Ascending aorta (tissue), 2 donors: ENCODE measurements at regions of chr17 and their contacts with region 1.

Region 1: GRCh38 chr17:50865984-50866774 is at the start of gene TOB1:
- DNase-seq: peak; percentile 92 to 99
- H3K4me3 ChIP-seq: peak within 1 kb of the TSS; percentile 98 to 99
- H3K27ac ChIP-seq: peak within 1 kb of the TSS; percentile 99 to 100
- H3K4me1 ChIP-seq: peaks cover 0 to 22% of the 10 kb centered on the region in 2 donors
- H3K27me3 ChIP-seq: no peaks in the 10 kb centered on the region
- CTCF ChIP-seq: no peak
- total RNA-seq, gene TOB1: 41.7 TPM

Region 2: GRCh38 chr17:50672831-50673601 is 193.2 kb before region 1 on chr17:
- intact Hi-C with region 1: no loop called
- DNase-seq: peak; percentile 54 to 90
- H3K4me3 ChIP-seq: no peak overlapping the region
- H3K27ac ChIP-seq: peak overlapping the region; percentile 51 to 66
- H3K4me1 ChIP-seq: peaks cover 2 to 7% of the 10 kb centered on the region in 2 donors
- H3K27me3 ChIP-seq: no peaks in the 10 kb centered on the region
- CTCF ChIP-seq: no peak

Region 3: GRCh38 chr17:50798424-50799288 is 67.5 kb before region 1 on chr17:
- intact Hi-C with region 1: no loop called
- DNase-seq: no peak
- H3K4me3 ChIP-seq: no peak overlapping the region
- H3K27ac ChIP-seq: peak overlapping the region in 1 of 2 donors; percentile 23
- H3K4me1 ChIP-seq: no peaks in the 10 kb centered on the region
- H3K27me3 ChIP-seq: no peaks in the 10 kb centered on the region
- CTCF ChIP-seq: no peak

Region 4: GRCh38 chr17:50904521-50905459 is 38.6 kb after region 1 on chr17:
- intact Hi-C with region 1: loop called (anchors 1 kb)
- DNase-seq: peak in 1 of 2 donors; percentile 82
- H3K4me3 ChIP-seq: no peak overlapping the region
- H3K27ac ChIP-seq: peak overlapping the region; percentile 95 to 99
- H3K4me1 ChIP-seq: peaks cover 13 to 26% of the 10 kb centered on the region in 2 donors
- H3K27me3 ChIP-seq: no peaks in the 10 kb centered on the region
- CTCF ChIP-seq: no peak

Region 5: GRCh38 chr17:50919321-50920085 is 53.3 kb after region 1 on chr17:
- intact Hi-C with region 1: loop called (anchors 1 kb)
- DNase-seq: peak; percentile 77 to 96
- H3K4me3 ChIP-seq: no peak overlapping the region
- H3K27ac ChIP-seq: peak overlapping the region; percentile 50 to 63
- H3K4me1 ChIP-seq: peaks cover 0 to 16% of the 10 kb centered on the region in 2 donors
- H3K27me3 ChIP-seq: no peaks in the 10 kb centered on the region
- CTCF ChIP-seq: peak in 1 of 3 experiments; percentile 29

Region 6: GRCh38 chr17:50931144-50931908 is 65.1 kb after region 1 on chr17:
- intact Hi-C with region 1: loop called (anchors 1 kb)
- DNase-seq: peak; percentile 79 to 96
- H3K4me3 ChIP-seq: peak overlapping the region; percentile 47 to 63
- H3K27ac ChIP-seq: peak overlapping the region; percentile 96 to 98
- H3K4me1 ChIP-seq: peaks cover 18 to 38% of the 10 kb centered on the region in 2 donors
- H3K27me3 ChIP-seq: no peaks in the 10 kb centered on the region
- CTCF ChIP-seq: no peak

Region 7: DNA sequence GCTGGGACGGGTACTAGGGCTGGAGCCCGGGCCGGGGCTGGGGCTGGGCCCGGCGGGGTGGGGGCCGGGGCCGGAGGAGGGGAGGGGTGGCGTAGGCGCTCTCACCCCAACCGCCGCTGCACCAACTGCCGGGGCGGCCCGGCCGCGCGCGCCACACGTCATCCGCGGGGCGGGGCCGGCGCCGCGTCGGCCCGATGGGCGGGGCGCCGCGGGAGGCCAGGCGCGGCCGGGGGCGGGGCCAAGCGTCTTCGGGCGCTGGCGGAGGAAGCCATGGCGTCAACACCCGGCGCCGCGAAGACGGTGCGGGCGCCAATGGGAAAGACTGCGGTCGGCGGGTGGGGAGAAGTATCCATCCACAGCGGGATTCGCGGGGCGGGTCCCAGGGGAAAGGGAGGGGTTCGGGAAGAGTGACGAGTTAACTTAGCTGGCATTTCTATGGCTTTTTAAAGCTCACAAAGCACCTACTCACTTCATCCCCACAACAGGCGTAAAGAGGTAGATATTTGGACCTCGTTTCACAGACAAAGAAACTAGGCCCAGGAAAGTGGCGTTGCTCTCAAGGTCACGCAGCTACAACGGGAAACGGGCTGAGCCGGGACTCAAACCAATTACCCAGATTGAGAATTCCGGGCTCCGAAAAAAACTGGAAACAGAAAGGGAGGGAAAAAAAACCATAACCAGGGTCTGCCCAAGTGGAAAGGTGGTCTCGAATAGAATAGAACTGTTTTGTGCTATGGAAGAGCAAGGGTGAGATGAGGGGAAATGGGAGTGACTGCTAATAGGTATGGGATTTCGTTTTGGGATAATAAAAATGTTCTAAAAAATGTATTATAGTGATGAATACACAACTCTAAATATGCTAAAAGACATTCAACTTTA is 254.8 kb after region 1 on chr17 and contains the start of gene SPAG9:
- intact Hi-C with region 1: loop called (anchors 2 kb)
- DNase-seq: peak; percentile 85 to 98
- H3K4me3 ChIP-seq: peak within 1 kb of the TSS; percentile 99 to 100
- H3K27ac ChIP-seq: peak within 1 kb of the TSS; percentile 99
- H3K4me1 ChIP-seq: peaks cover 3 to 20% of the 10 kb centered on the region in 2 donors
- H3K27me3 ChIP-seq: no peaks in the 10 kb centered on the region
- CTCF ChIP-seq: no peak
- total RNA-seq, gene SPAG9: 41.3 TPM